ENCODE measurements at regions of chr3 and their contacts with region 1.

Region 1: GRCh38 chr3:78978037-78978436 is 789.8 kb downstream of the ROBO1 start:
- DNase-seq: peak; percentile 37
- H3K4me3 ChIP-seq: no peak overlapping the region
- H3K27ac ChIP-seq: no peak overlapping the region
- H3K4me1 ChIP-seq: peaks cover 13% of the 10 kb centered on the region
- H3K27me3 ChIP-seq: no peaks in the 10 kb centered on the region
- CTCF ChIP-seq: peak; percentile 20 to 26
- POLR2A ChIP-seq: no peak

Region 2: GRCh38 chr3:78659386-78659987 is 318.6 kb before region 1 on chr3:
- CTCF ChIA-PET with region 1: interaction called, 12 read pairs
- POLR2A ChIA-PET with region 1: no interaction called
- dilution Hi-C with region 1: no loop called
- intact Hi-C with region 1: loop called (anchors 1 kb)
- DNase-seq: peak; percentile 52
- H3K4me3 ChIP-seq: no peak overlapping the region
- H3K27ac ChIP-seq: no peak overlapping the region
- H3K4me1 ChIP-seq: no peaks in the 10 kb centered on the region
- H3K27me3 ChIP-seq: no peaks in the 10 kb centered on the region
- CTCF ChIP-seq: peak; percentile 20 to 29
- POLR2A ChIP-seq: no peak

Region 3: DNA sequence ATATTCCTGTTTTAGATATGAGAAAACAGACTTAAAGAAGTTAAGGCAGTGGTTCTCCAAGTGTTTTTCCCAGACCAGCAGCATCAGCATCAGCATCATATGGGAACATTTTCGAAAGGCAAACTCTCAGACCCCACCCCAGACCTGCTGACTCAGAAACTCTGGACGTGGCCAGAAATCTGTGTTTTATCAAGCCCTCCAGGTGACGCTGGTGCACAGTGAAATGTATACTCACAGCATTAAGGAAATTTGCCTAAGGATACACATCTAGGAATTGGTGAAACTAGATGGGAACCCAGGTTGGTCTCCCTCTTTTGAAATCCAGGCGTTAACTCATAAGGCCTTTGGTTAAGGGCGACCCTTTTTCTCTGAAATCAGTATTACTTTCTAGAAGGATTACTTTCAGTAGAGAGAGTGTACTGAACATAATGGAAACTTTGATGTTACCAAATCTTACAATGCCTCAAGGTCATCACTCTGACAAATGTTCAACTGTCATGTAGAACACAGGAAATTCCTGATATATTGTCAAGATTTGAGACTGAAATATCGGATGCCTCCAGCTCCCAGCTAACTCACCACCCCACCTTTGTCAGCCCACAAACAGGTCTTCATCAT is 120.4 kb before region 1 on chr3:
- CTCF ChIA-PET with region 1: no interaction called
- POLR2A ChIA-PET with region 1: no interaction called
- dilution Hi-C with region 1: no loop called
- intact Hi-C with region 1: loop called (anchors 5 kb)
- DNase-seq: no peak
- H3K4me3 ChIP-seq: no peak overlapping the region
- H3K27ac ChIP-seq: no peak overlapping the region
- H3K4me1 ChIP-seq: peaks cover 10% of the 10 kb centered on the region
- H3K27me3 ChIP-seq: no peaks in the 10 kb centered on the region
- CTCF ChIP-seq: no peak
- POLR2A ChIP-seq: no peak

Region 4: GRCh38 chr3:79052054-79052681 is 74.1 kb after region 1 on chr3:
- CTCF ChIA-PET with region 1: no interaction called
- POLR2A ChIA-PET with region 1: no interaction called
- dilution Hi-C with region 1: no loop called
- intact Hi-C with region 1: no loop called
- DNase-seq: no peak
- H3K4me3 ChIP-seq: no peak overlapping the region
- H3K27ac ChIP-seq: no peak overlapping the region
- H3K4me1 ChIP-seq: no peaks in the 10 kb centered on the region
- H3K27me3 ChIP-seq: no peaks in the 10 kb centered on the region
- CTCF ChIP-seq: no peak
- POLR2A ChIP-seq: no peak

Region 5: GRCh38 chr3:79531561-79532270 is 553.7 kb after region 1 on chr3:
- CTCF ChIA-PET with region 1: no interaction called
- POLR2A ChIA-PET with region 1: no interaction called
- dilution Hi-C with region 1: no loop called
- intact Hi-C with region 1: no loop called
- DNase-seq: no peak
- H3K4me3 ChIP-seq: no peak overlapping the region
- H3K27ac ChIP-seq: no peak overlapping the region
- H3K4me1 ChIP-seq: no peaks in the 10 kb centered on the region
- H3K27me3 ChIP-seq: no peaks in the 10 kb centered on the region
- CTCF ChIP-seq: no peak
- POLR2A ChIP-seq: no peak

Measured in endothelial cell of umbilical vein (primary cell).